ENCODE measurements at regions of chr10 and their contacts with region 1.

Region 1: GRCh38 chr10:31745612-31746376 is 182.8 kb downstream of the ARHGAP12 start:
- DNase-seq: peak; percentile 49
- H3K4me3 Mint-ChIP-seq: peak overlapping the region; percentile 2
- H3K27ac Mint-ChIP-seq: peak overlapping the region; percentile 82
- H3K4me1 Mint-ChIP-seq: peaks cover 27% of the 10 kb centered on the region
- H3K27me3 Mint-ChIP-seq: no peaks in the 10 kb centered on the region

Region 2: DNA sequence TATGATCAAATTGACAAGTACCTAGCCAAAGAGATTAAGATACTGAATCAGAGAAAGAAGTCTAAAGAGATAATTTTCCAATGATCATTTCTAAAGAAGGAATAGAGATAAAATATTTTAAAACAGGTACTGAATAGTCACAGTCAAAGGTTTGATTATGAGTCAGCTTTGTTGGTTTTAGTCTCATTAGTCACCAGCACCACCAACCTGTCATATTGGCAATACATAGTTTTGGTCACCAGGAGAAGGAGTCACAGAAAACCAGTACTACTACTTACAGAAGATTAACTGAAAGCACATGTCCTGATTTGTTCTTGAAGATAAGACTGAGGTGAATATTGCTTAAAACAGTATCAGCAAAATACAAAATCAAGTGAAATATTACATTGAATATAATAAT is 392.2 kb before region 1 on chr10:
- intact Hi-C with region 1: loop called (anchors 5 kb)
- DNase-seq: no peak
- H3K4me3 Mint-ChIP-seq: no peak overlapping the region
- H3K27ac Mint-ChIP-seq: peak overlapping the region; percentile 85
- H3K4me1 Mint-ChIP-seq: peaks cover 37% of the 10 kb centered on the region
- H3K27me3 Mint-ChIP-seq: no peaks in the 10 kb centered on the region

Region 3: DNA sequence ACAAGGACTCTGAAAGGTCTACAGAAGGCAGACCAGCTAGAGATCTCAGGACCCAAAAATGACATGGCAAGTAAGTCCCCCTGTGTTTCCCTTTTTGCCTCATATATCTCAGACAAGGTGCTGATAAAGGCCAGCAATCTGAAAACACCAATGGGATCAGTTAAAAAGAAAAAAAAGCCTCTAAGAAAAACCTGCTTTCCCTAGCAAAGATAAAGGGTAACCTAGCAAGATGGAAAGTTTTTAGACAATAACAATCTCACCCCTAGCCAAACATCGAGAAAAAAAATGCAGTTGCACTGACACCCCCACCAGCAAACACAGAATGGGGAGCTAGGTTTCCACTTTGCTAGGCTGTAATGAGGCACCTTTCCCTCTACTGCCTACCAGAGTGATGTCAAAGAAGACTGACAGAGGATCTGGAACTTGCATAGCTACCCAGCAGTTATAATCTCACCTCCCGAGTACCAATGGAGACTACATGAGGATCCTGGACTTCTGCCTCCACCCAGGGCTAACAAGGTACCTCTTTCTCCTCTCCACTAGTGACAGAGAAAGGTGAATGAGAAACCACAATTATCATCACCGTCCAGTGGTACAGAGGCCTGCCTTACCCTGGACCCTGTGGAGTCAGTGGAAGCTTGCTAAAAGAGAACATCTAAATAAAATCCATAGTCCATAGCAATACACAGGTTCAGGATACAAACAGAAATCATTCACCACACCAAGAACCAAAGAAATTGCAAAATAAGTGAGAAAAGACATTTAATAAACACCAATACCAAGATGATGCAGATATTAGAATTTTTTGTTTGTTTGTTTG is 57.9 kb before region 1 on chr10:
- intact Hi-C with region 1: loop called (anchors 1 kb)
- DNase-seq: peak; percentile 29
- H3K4me3 Mint-ChIP-seq: no peak overlapping the region
- H3K27ac Mint-ChIP-seq: peak overlapping the region; percentile 0
- H3K4me1 Mint-ChIP-seq: peaks cover 5% of the 10 kb centered on the region
- H3K27me3 Mint-ChIP-seq: no peaks in the 10 kb centered on the region

Region 4: DNA sequence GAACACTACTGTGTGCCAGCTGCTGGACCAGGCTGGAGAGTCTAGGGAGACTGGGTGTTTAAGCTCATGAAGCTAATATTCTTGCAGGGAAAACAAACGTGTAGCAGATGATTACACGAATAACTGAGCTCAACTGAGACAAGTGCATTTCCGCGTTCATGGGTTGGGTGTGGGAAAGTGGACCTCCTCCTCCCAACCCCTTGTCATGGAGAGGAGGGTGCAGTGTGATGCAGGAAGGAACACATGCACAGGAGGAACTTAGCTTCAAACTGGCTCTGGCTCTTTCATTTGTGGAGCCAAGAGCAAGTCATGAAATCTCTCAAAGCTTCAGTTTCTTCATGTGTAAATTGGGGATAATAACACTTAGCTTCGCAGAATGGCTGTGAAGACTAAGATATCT is 21.5 kb before region 1 on chr10:
- intact Hi-C with region 1: loop called (anchors 2 kb)
- DNase-seq: no peak
- H3K4me3 Mint-ChIP-seq: no peak overlapping the region
- H3K27ac Mint-ChIP-seq: peak overlapping the region; percentile 15
- H3K4me1 Mint-ChIP-seq: peaks cover 11% of the 10 kb centered on the region
- H3K27me3 Mint-ChIP-seq: peaks cover 5% of the 10 kb centered on the region